ENCODE measurements at regions of chr6 and their contacts with region 1.

Region 1: DNA sequence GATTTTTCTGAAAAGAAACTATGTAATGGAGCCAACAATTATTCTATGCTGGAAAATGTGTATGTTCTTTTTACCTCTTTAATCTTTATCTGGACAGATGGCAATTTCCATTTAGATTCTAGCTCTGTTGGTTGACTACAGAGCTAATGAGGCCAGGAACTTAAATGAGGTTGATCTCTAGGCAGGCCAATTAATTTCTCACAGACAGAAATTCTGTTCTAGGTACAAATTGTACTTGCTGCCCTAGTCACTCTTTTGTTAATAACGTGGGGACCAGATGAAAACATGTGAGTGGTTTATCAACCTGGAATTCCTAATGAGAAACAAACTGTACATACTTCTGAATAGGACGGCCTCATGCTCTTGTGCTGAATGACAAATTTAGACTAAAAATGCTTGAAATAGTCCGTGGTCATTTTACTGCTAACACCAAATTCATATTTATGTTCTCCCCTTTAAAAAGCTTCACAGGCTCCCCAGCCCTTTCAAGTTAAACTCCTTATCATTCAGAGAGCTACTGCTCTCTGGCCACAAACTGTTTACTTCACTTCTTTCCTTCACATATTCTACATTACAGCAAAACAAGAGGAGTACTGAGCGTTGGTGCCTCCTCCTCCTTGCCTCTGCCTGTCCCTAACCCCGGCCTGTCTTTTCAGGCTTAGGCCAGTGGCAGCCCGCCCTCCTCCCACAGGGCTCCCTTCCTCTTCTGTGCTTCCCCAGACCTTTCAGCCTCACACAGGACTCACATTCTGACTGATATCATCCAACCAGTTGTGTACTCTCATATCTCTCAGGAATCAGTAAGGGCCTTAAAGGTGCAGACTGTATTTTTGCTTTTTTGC is 41.4 kb downstream of the DTNBP1 start:
- DNase-seq: no peak
- ATAC-seq: no peak
- H3K4me3 Mint-ChIP-seq: no peak overlapping the region
- H3K27ac Mint-ChIP-seq: no peak overlapping the region
- H3K4me1 Mint-ChIP-seq: peaks cover 9% of the 10 kb centered on the region
- H3K27me3 Mint-ChIP-seq: no peaks in the 10 kb centered on the region

Region 2: GRCh38 chr6:15522427-15522826 is 99.0 kb before region 1 on chr6:
- CTCF ChIA-PET with region 1: interaction called, 11 read pairs
- POLR2A ChIA-PET with region 1: no interaction called
- DNase-seq: no peak
- ATAC-seq: no peak
- H3K4me3 Mint-ChIP-seq: no peak overlapping the region
- H3K27ac Mint-ChIP-seq: peak overlapping the region; percentile 37
- H3K4me1 Mint-ChIP-seq: peaks cover 11% of the 10 kb centered on the region
- H3K27me3 Mint-ChIP-seq: no peaks in the 10 kb centered on the region

Region 3: GRCh38 chr6:15561447-15562199 is 59.8 kb before region 1 on chr6:
- CTCF ChIA-PET with region 1: no interaction called
- POLR2A ChIA-PET with region 1: no interaction called
- DNase-seq: no peak
- ATAC-seq: no peak
- H3K4me3 Mint-ChIP-seq: no peak overlapping the region
- H3K27ac Mint-ChIP-seq: no peak overlapping the region
- H3K4me1 Mint-ChIP-seq: no peaks in the 10 kb centered on the region
- H3K27me3 Mint-ChIP-seq: no peaks in the 10 kb centered on the region

Region 4: DNA sequence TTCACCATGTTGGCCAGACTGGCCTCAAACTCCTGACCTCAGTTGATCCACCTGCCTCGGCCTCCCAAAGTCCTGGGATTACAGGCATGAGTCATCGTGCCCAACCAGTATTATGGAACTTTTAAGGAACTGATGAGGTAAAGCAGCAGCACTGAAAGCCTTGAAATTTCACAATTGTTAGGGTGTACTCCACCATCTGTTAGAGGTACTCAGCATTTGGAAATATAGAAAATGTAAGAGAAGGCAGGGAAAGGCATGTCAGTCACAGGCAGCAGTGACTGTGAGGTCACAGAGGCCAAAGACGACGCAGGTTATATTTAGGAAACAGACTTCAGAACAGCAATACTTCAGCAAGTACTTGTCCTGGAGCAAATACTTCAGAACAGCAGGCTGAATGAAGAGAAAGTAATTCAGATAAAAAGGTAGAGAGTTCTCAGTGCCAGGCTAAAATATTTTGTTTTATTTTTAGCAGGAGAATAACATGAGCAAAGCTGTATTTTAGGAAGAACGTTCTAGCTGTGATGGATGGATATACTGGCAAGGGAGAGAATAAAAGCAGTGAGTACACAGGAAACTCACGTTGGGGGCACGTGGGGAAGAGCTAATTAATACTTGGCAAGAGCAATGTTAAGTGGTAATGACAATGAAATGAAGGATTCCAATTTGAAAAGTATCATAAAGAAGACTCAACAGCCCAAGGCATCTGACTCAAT is 25.8 kb before region 1 on chr6:
- CTCF ChIA-PET with region 1: no interaction called
- POLR2A ChIA-PET with region 1: no interaction called
- DNase-seq: no peak
- ATAC-seq: no peak
- H3K4me3 Mint-ChIP-seq: no peak overlapping the region
- H3K27ac Mint-ChIP-seq: no peak overlapping the region
- H3K4me1 Mint-ChIP-seq: peaks cover 8% of the 10 kb centered on the region
- H3K27me3 Mint-ChIP-seq: no peaks in the 10 kb centered on the region

Region 5: GRCh38 chr6:15608396-15608795 is 13.0 kb before region 1 on chr6:
- CTCF ChIA-PET with region 1: interaction called, 14 read pairs
- POLR2A ChIA-PET with region 1: no interaction called
- DNase-seq: no peak
- ATAC-seq: no peak
- H3K4me3 Mint-ChIP-seq: no peak overlapping the region
- H3K27ac Mint-ChIP-seq: no peak overlapping the region
- H3K4me1 Mint-ChIP-seq: peaks cover 12% of the 10 kb centered on the region
- H3K27me3 Mint-ChIP-seq: no peaks in the 10 kb centered on the region

Region 6: GRCh38 chr6:15642276-15642675 is 20.9 kb after region 1 on chr6:
- CTCF ChIA-PET with region 1: interaction called, 14 read pairs
- POLR2A ChIA-PET with region 1: no interaction called
- DNase-seq: no peak
- ATAC-seq: no peak
- H3K4me3 Mint-ChIP-seq: no peak overlapping the region
- H3K27ac Mint-ChIP-seq: no peak overlapping the region
- H3K4me1 Mint-ChIP-seq: peaks cover 3% of the 10 kb centered on the region
- H3K27me3 Mint-ChIP-seq: no peaks in the 10 kb centered on the region

Measured in activated CD8-positive, alpha-beta T cell treated with anti-CD3 and anti-CD28 coated beads, Interleukin-2, amount 10 ng/mL, durations not matched to agents 7 days and 5 days (primary cell).